Activated B cell treated with CpG ODN at 0.5 μM for 24 hours (primary cell): ENCODE measurements at regions of chr5 and their contacts with region 1.

Region 1: DNA sequence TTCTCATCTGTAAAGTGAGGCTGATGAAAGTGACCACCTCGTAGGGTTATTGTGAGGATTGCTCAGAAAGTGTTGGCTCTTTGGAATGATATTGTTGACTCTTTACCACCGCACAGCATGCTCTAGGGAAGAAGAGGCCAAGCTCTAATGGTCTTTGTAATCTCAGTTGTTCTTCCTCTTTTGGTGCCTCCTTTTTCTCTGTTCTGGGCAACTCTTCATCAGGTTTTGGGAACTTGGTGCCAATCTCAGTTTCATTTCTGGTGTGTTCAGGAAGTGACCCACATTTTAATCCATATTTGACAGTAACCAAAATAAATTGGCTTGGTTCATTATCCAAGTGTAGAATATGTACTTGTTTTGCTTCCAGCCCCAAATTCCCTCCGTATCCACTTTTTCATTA is 25.1 kb downstream of the ARHGAP26 start:
- DNase-seq: no peak
- ATAC-seq: peak; percentile 79
- H3K4me3 Mint-ChIP-seq: peak overlapping the region; percentile 33
- H3K27ac Mint-ChIP-seq: peak overlapping the region; percentile 87
- H3K4me1 Mint-ChIP-seq: peaks cover 81% of the 10 kb centered on the region
- H3K27me3 Mint-ChIP-seq: no peaks in the 10 kb centered on the region
- CTCF ChIP-seq: no peak

Region 2: GRCh38 chr5:142807372-142807911 is 12.2 kb after region 1 on chr5:
- CTCF ChIA-PET with region 1: interaction called, 6 read pairs
- POLR2A ChIA-PET with region 1: interaction called, 6 read pairs
- intact Hi-C with region 1: loop called (anchors 1 kb)
- DNase-seq: no peak
- ATAC-seq: peak; percentile 87
- H3K4me3 Mint-ChIP-seq: peak overlapping the region; percentile 55
- H3K27ac Mint-ChIP-seq: peak overlapping the region; percentile 61
- H3K4me1 Mint-ChIP-seq: peaks cover 39% of the 10 kb centered on the region
- H3K27me3 Mint-ChIP-seq: no peaks in the 10 kb centered on the region
- CTCF ChIP-seq: no peak

Region 3: DNA sequence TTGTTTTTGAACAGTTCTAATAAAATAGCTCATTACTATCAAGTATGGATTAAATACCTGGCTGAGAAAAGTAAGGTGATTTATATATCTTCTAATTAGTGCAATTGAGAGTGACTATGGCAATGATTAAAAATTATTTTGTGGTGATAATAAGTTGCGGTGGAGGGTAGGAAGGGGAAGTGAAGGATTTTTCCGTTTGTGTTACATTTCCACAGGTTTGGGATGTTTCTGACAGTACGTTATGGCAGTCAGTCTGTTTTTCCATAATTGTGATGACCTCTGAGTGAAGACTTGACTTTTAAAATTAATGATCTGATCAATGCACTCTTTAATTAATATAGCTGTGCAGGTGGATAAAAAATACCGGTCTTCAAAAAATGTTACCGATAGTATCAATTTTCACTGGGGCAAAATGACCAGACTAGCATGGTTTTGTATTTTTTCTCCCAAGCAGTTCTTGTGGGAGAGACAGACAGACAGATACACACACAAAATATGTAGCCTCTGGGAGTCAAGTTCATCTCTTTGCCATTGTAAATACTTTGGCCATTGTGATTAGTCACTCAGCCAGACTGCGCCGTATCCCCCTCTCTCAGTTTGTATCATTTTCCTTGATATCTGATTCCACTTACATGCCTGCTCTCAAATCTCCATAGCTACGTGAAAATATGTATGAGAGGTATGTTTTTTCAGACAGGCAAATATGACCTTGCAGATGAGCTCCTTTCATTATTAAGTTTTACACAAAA is 35.2 kb after region 1 on chr5:
- CTCF ChIA-PET with region 1: no interaction called
- POLR2A ChIA-PET with region 1: no interaction called
- intact Hi-C with region 1: no loop called
- DNase-seq: no peak
- ATAC-seq: no peak
- H3K4me3 Mint-ChIP-seq: no peak overlapping the region
- H3K27ac Mint-ChIP-seq: no peak overlapping the region
- H3K4me1 Mint-ChIP-seq: peaks cover 4% of the 10 kb centered on the region
- H3K27me3 Mint-ChIP-seq: no peaks in the 10 kb centered on the region
- CTCF ChIP-seq: no peak